AG04449 (cell line): ENCODE measurements at regions of chr10 and their contacts with region 1.

Region 1: GRCh38 chr10:46228563-46229071 is 58.2 kb upstream of the ANTXRL start:
- DNase-seq: peak; percentile 9
- H3K4me3 ChIP-seq: no peak overlapping the region
- CTCF ChIP-seq: peak; percentile 94

Region 2: DNA sequence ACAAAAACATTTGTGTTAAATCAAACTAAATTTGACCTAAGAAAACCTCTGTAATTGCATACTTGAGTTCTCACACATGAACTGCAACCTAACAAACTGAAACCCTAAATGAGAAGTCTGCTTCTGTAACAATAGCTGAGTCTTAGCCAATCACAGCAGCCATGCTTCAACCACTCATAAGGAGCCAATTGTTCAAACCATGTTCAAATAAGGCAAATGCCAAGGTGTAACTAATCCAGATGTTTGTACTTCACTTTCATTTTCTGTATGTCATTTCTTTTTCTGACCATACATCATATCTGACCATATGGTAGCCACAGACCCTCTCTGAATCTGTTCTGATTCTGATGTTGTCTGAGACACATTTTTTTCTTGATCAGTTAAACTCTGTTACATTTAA is 10.6 kb after region 1 on chr10:
- CTCF ChIA-PET with region 1: interaction called, 12 read pairs
- POLR2A ChIA-PET with region 1: no interaction called
- DNase-seq: no peak
- H3K4me3 ChIP-seq: no peak overlapping the region
- CTCF ChIP-seq: no peak

Region 3: GRCh38 chr10:46247808-46248569 is 19.4 kb after region 1 on chr10:
- CTCF ChIA-PET with region 1: interaction called, 12 read pairs
- POLR2A ChIA-PET with region 1: no interaction called
- DNase-seq: no peak
- H3K4me3 ChIP-seq: no peak overlapping the region
- CTCF ChIP-seq: no peak

Region 4: DNA sequence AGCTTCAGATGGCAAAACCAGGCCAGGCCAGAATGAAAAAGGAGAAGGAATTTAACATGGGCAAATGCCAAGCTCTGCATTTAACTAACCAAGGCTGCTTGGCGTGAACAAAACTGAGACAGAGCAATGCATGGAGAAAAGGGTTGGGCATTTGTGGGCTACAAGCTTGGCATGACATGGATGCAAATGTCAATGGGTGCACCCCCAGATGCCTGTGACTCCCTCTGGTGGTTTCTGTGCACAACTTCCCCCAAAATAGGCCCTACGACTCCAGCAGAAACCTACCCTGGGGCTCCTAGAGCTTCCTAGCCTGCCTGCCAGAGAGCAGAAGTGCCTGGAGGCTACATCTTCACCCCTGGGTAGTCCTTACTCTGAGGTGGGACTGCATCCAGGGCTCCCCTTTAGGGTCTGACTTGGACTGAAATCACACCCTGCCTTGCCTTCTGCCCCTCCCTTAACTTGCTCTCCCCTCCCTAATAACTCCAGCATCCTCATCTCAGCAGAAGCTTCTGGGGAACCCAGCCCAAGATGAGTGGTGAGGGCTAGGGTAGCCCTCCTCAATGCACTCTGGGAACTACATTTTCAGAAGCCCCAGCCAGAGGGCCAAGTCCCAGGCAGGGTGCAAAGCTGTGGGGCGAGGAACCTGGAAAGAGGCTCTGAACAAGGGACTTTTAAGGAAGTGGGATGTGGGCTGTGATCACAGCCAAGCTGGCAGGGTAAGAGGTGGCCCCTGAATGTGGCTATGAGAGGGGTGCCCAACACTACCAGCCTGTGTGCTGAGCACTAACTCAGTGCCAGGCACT is 316.6 kb after region 1 on chr10:
- CTCF ChIA-PET with region 1: interaction called, 15 read pairs
- POLR2A ChIA-PET with region 1: no interaction called
- DNase-seq: no peak
- H3K4me3 ChIP-seq: no peak overlapping the region
- CTCF ChIP-seq: peak; percentile 43